ENCODE measurements at regions of chr12 and their contacts with region 1.

Region 1: DNA sequence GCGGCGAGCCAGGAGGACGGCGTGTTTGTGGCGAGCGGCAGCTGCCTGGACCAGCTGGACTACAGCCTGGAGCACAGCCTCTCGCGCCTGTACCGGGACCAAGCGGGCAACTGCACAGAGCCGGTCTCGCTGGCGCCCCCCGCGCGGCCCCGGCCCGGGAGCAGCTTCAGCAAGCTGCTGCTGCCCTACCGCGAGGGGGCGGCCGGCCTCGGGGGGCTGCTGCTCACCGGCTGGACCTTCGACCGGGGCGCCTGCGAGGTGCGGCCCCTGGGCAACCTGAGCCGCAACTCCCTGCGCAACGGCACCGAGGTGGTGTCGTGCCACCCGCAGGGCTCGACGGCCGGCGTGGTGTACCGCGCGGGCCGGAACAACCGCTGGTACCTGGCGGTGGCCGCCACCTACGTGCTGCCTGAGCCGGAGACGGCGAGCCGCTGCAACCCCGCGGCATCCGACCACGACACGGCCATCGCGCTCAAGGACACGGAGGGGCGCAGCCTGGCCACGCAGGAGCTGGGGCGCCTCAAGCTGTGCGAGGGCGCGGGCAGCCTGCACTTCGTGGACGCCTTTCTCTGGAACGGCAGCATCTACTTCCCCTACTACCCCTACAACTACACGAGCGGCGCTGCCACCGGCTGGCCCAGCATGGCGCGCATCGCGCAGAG is 873 bp downstream of the PLXNC1 start:
- DNase-seq: peak in 4 of 5 donors; percentile 40 to 54 (median 48)
- H3K4me3 ChIP-seq: peak overlapping the region; percentile 57 to 62
- H3K4me3 Mint-ChIP-seq: peak overlapping the region; percentile 92 to 98 (median 94)
- H3K27ac ChIP-seq: no peak overlapping the region
- H3K27ac Mint-ChIP-seq: peak overlapping the region in 1 of 7 donors; percentile 42
- H3K4me1 ChIP-seq: peaks cover 33% of the 10 kb centered on the region
- H3K4me1 Mint-ChIP-seq: peaks cover 27 to 56% (median 41%) of the 10 kb centered on the region in 4 donors
- H3K27me3 ChIP-seq: no peaks in the 10 kb centered on the region
- H3K27me3 Mint-ChIP-seq: no peaks in the 10 kb centered on the region

Region 2: DNA sequence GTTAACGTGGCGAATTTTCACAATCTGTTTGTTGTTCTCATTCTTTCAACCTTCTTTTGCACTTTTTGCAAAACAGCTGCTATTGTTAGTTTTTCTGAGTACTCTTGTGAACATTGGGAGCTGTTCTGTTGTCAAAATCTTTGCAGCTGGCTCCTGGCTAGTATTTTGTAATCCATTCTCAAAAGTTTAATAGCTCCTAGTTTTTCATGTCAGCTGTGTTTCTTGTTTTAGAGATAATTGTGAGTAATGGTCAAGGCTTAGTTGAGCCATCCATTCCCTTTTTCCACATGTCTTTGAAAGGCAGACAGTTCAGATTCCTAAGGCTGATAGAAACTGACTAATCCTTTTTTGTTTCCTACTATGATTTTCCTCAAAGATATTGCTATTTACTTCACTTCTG is 511.2 kb before region 1 on chr12:
- CTCF ChIA-PET with region 1: no interaction called
- POLR2A ChIA-PET with region 1: no interaction called
- intact Hi-C with region 1: no loop called
- DNase-seq: no peak
- H3K4me3 ChIP-seq: no peak overlapping the region
- H3K4me3 Mint-ChIP-seq: no peak overlapping the region
- H3K27ac ChIP-seq: no peak overlapping the region
- H3K27ac Mint-ChIP-seq: no peak overlapping the region
- H3K4me1 ChIP-seq: no peaks in the 10 kb centered on the region
- H3K4me1 Mint-ChIP-seq: no peaks in the 10 kb centered on the region
- H3K27me3 ChIP-seq: no peaks in the 10 kb centered on the region
- H3K27me3 Mint-ChIP-seq: peaks cover 17 to 19% of the 10 kb centered on the region in 2 donors

Region 3: GRCh38 chr12:94133964-94134795 is 15.1 kb before region 1 on chr12:
- CTCF ChIA-PET with region 1: interaction called, 34 read pairs
- POLR2A ChIA-PET with region 1: interaction called, 11 read pairs
- intact Hi-C with region 1: loop called (anchors 1 kb)
- DNase-seq: peak in 4 of 5 donors; percentile 49 to 59 (median 56)
- H3K4me3 ChIP-seq: no peak overlapping the region
- H3K4me3 Mint-ChIP-seq: no peak overlapping the region
- H3K27ac ChIP-seq: no peak overlapping the region
- H3K27ac Mint-ChIP-seq: no peak overlapping the region
- H3K4me1 ChIP-seq: peaks cover 3% of the 10 kb centered on the region
- H3K4me1 Mint-ChIP-seq: peaks cover 2 to 7% (median 3%) of the 10 kb centered on the region in 4 donors
- H3K27me3 ChIP-seq: no peaks in the 10 kb centered on the region
- H3K27me3 Mint-ChIP-seq: peaks cover 0 to 4% of the 10 kb centered on the region in 2 donors

Region 4: GRCh38 chr12:94282675-94283074 is 133.4 kb after region 1 on chr12:
- CTCF ChIA-PET with region 1: interaction called, 3 read pairs
- POLR2A ChIA-PET with region 1: interaction called, 4 read pairs
- intact Hi-C with region 1: loop called (anchors 1 kb)
- DNase-seq: peak; percentile 57 to 71 (median 66)
- H3K4me3 ChIP-seq: peak overlapping the region; percentile 5 to 17
- H3K4me3 Mint-ChIP-seq: peak overlapping the region; percentile 16 to 86 (median 78)
- H3K27ac ChIP-seq: peak overlapping the region; percentile 47
- H3K27ac Mint-ChIP-seq: peak overlapping the region; percentile 85 to 96 (median 94)
- H3K4me1 ChIP-seq: peaks cover 27% of the 10 kb centered on the region
- H3K4me1 Mint-ChIP-seq: peaks cover 30 to 33% (median 32%) of the 10 kb centered on the region in 4 donors
- H3K27me3 ChIP-seq: no peaks in the 10 kb centered on the region
- H3K27me3 Mint-ChIP-seq: no peaks in the 10 kb centered on the region

Region 5: DNA sequence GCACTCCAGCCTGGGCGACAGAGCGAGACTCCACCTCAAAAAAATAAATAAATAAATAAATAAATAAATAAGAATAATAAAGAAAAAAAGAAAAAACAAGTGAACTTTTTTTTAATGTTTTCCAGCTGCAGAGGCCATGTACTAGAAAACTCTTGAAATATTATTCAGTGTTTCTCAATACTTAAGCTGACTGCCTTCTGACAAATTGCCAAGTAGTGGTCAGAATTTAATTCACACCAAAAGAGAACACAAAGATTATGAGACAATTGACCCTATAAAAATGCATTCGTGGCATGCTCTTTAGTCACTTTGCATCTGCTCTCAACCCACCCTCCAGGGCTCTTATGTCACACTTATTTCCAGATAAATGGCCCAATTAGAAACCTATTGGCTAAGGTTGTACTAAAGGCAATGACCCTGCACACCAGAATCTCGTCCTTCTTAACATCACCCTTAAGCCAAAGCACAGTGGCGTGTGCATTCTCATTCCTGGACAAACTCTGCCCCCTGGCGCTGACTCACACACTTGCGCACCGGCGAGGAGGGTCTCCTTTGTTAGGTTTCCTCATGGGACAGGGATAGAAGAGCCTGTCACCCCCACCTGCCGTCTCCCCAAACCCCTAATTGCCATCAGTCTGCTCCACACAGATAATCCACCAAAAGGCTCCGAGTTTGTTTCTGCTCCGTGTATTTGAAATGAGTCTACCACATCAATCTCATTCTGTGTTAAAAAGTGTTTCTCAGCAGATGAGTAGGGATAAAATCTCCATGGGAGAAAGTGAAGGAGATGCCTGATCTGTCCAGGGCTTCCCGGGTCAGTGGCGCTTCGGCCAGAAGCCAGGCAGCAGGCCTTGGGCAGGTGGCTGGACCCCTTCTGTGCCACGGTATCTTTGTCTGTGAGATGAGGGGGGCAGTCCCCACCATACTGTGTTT is 383.5 kb after region 1 on chr12:
- CTCF ChIA-PET with region 1: interaction called, 8 read pairs
- POLR2A ChIA-PET with region 1: no interaction called
- intact Hi-C with region 1: loop called (anchors 1 kb)
- DNase-seq: peak; percentile 48 to 64 (median 56)
- H3K4me3 ChIP-seq: no peak overlapping the region
- H3K4me3 Mint-ChIP-seq: no peak overlapping the region
- H3K27ac ChIP-seq: no peak overlapping the region
- H3K27ac Mint-ChIP-seq: no peak overlapping the region
- H3K4me1 ChIP-seq: no peaks in the 10 kb centered on the region
- H3K4me1 Mint-ChIP-seq: peaks cover 0 to 5% (median 3%) of the 10 kb centered on the region in 4 donors
- H3K27me3 ChIP-seq: no peaks in the 10 kb centered on the region
- H3K27me3 Mint-ChIP-seq: peaks cover 2 to 18% of the 10 kb centered on the region in 2 donors

Region 6: GRCh38 chr12:95072900-95073697 is 923.8 kb after region 1 on chr12 and contains the start of gene NR2C1:
- CTCF ChIA-PET with region 1: no interaction called
- POLR2A ChIA-PET with region 1: no interaction called
- intact Hi-C with region 1: loop called (anchors 5 kb)
- DNase-seq: peak; percentile 92 to 95 (median 94)
- H3K4me3 ChIP-seq: peak within 1 kb of the TSS; percentile 88 to 89
- H3K4me3 Mint-ChIP-seq: peak within 1 kb of the TSS; percentile 93 to 99 (median 95)
- H3K27ac ChIP-seq: peak within 1 kb of the TSS; percentile 76
- H3K27ac Mint-ChIP-seq: peak within 1 kb of the TSS; percentile 84 to 98 (median 96)
- H3K4me1 ChIP-seq: peaks cover 22% of the 10 kb centered on the region
- H3K4me1 Mint-ChIP-seq: peaks cover 14 to 39% (median 20%) of the 10 kb centered on the region in 4 donors
- H3K27me3 ChIP-seq: no peaks in the 10 kb centered on the region
- H3K27me3 Mint-ChIP-seq: no peaks in the 10 kb centered on the region
- total RNA-seq, gene NR2C1: 45.4 to 55.4 TPM